Activated T-helper 1 cell treated with anti-CD3 and anti-CD28 coated beads, Interleukin-12 subunit alpha, Interleukin-12 subunit beta, Interleukin-2, Interleukin-4 antibody, amounts not matched to agents 30 ng/mL and 10 ng/mL and 1 ng/mL, durations not matched to agents 14 hours and 24 hours and 36 hours (primary cell): ENCODE measurements at regions of chr3 and their contacts with region 1.

Region 1: DNA sequence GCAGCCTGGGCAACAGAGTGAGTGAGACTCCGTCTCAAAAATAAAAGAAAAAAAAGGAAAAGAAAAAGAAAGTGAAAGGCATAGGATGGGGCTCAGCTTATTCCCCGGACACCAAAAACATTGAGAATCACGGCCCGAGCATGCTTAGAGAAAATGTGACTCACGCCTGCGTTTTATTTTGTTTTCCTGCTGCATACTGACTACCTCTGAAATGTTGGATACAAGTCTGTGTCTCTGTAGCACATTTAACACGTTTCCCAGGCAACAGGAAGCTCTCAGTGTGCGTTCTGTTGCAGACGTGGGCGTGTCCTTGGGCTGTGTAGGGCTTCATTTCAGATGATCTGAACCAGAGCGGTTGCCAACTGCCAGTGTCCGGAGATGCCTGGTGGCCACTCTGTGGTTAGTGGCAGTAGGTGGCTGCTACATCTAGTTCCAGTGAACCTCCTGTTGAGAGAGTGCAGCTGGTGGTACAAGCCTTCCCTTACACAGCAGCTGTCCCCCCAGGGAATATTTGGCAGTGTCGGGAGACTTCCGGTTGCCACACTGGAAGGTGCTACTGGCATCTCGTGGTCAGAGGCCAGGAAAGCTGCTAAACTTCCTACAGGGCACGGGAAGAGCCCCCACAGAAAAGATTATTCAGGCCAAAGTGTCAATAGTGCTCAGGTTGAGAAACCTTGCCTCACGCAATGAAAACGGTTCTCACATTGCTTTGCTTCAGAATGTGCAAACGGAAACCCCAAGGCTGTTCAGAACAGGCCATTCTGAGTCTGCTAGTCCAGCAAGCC is 3.1 kb downstream of the SLC51A start:
- DNase-seq: peak; percentile 56
- H3K4me3 Mint-ChIP-seq: peak overlapping the region; percentile 76
- H3K27ac Mint-ChIP-seq: peak overlapping the region; percentile 81
- H3K4me1 Mint-ChIP-seq: peaks cover 22% of the 10 kb centered on the region
- H3K27me3 Mint-ChIP-seq: peaks cover 3% of the 10 kb centered on the region

Region 2: GRCh38 chr3:195556387-195556786 is 663.0 kb before region 1 on chr3:
- intact Hi-C with region 1: no loop called
- DNase-seq: no peak
- H3K4me3 Mint-ChIP-seq: no peak overlapping the region
- H3K27ac Mint-ChIP-seq: no peak overlapping the region
- H3K4me1 Mint-ChIP-seq: peaks cover 36% of the 10 kb centered on the region
- H3K27me3 Mint-ChIP-seq: peaks cover 3% of the 10 kb centered on the region

Region 3: GRCh38 chr3:196287440-196288148 is 68.2 kb after region 1 on chr3 and contains the start of gene PCYT1A:
- intact Hi-C with region 1: loop called (anchors 1 kb)
- DNase-seq: peak; percentile 72
- H3K4me3 Mint-ChIP-seq: peak within 1 kb of the TSS; percentile 99
- H3K27ac Mint-ChIP-seq: peak within 1 kb of the TSS; percentile 95
- H3K4me1 Mint-ChIP-seq: peaks cover 44% of the 10 kb centered on the region
- H3K27me3 Mint-ChIP-seq: no peaks in the 10 kb centered on the region
- total RNA-seq, gene PCYT1A: 54.7 and 57.0 TPM in 2 replicates